Breast epithelium (tissue), 4 donors: ENCODE measurements at regions of chr5 and their contacts with region 1.

Region 1: DNA sequence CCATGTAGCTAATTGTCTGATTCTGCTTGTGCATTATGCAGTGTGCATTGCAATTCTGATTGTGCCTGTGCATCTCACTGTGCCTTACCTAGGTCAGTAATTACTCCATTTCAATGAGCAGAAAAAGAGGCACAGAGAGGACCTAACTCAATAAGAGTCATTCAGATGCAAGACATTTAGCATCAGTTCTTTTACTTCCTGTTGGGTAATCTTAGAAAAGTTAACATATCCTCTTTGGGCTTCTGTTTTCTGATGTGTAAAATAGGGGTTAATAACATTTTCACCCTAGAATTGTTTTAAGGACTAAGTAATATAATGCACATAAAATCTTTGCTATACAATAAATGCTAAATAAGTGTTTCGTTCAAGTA is 7.0 kb upstream of the DCTN4 start:
- DNase-seq: no peak
- H3K4me3 ChIP-seq: no peak overlapping the region
- H3K27ac ChIP-seq: no peak overlapping the region
- H3K4me1 ChIP-seq: no peaks in the 10 kb centered on the region
- H3K27me3 ChIP-seq: no peaks in the 10 kb centered on the region
- CTCF ChIP-seq: no peak
- POLR2A ChIP-seq: no peak

Region 2: DNA sequence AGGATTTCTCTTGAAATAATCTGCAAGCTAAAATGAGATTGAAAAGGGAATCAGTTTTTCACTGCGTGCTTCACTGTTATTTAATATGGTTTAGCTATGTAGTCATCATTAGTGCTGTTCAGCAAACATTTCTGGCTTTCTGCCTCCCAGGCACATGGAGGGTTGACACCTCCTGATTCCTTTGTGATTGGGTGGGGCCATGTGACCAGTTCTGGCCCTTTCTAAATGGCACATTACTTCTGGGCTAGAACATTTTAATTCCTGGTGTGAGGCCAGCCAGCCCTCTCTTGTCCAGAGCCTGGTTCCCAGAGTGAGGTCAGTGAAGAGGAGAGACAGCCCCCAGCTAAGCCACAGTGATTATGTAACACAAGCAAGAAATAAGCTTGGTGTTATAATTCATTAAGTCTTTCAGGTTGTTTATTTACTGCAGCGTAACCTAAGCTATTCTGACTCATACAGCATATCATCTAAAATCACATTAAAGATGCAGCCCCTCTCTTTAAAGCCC is 445.7 kb before region 1 on chr5:
- intact Hi-C with region 1: no loop called
- DNase-seq: peak in 1 of 2 donors; percentile 88
- H3K4me3 ChIP-seq: no peak overlapping the region
- H3K27ac ChIP-seq: peak overlapping the region; percentile 28 to 72
- H3K4me1 ChIP-seq: no peaks in the 10 kb centered on the region
- H3K27me3 ChIP-seq: no peaks in the 10 kb centered on the region
- CTCF ChIP-seq: no peak
- POLR2A ChIP-seq: no peak

Region 3: DNA sequence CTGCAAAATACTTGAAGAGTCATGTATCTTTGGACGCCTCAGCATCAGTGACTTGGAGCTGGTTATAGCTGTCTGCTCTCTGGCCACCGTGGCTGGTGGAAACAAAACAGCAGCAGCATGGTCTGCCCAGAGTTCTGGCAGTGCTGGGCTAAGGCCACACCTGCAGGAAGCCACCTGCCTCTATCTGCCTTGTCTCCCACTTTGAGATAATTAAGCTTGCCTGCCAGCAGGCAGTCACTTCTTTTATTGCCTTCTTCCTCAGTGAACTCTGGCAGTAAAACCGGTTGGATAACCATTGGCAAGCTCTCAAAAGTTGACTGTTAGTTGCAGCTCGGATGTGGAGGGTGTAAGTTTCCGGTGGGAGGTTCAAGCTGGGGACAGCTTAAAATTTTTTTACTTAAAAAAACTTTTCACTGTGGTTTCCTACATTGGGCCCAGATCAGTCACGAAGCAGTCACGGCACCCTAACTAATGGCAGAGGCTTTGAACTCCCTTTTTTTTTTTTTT is 17.7 kb after region 1 on chr5:
- intact Hi-C with region 1: loop called (anchors 2 kb)
- DNase-seq: peak; percentile 54 to 77
- H3K4me3 ChIP-seq: peak overlapping the region in 1 of 3 donors; percentile 89
- H3K27ac ChIP-seq: peak overlapping the region; percentile 94 to 97
- H3K4me1 ChIP-seq: peaks cover 9 to 25% of the 10 kb centered on the region in 2 donors
- H3K27me3 ChIP-seq: no peaks in the 10 kb centered on the region
- CTCF ChIP-seq: no peak
- POLR2A ChIP-seq: no peak